ENCODE measurements at regions of chr11 and their contacts with region 1.

Region 1: GRCh38 chr11:70078095-70078795 is at the start of gene ANO1:
- DNase-seq: peak; percentile 33
- H3K4me3 ChIP-seq: peak within 1 kb of the TSS; percentile 31 to 48
- H3K27ac ChIP-seq: peak within 1 kb of the TSS; percentile 57
- H3K4me1 ChIP-seq: no peaks in the 10 kb centered on the region
- H3K27me3 ChIP-seq: no peaks in the 10 kb centered on the region
- CTCF ChIP-seq: peak in 1 of 4 experiments; percentile 29
- POLR2A ChIP-seq: no peak
- total RNA-seq, gene ANO1: 34.6 to 43.9 TPM

Region 2: DNA sequence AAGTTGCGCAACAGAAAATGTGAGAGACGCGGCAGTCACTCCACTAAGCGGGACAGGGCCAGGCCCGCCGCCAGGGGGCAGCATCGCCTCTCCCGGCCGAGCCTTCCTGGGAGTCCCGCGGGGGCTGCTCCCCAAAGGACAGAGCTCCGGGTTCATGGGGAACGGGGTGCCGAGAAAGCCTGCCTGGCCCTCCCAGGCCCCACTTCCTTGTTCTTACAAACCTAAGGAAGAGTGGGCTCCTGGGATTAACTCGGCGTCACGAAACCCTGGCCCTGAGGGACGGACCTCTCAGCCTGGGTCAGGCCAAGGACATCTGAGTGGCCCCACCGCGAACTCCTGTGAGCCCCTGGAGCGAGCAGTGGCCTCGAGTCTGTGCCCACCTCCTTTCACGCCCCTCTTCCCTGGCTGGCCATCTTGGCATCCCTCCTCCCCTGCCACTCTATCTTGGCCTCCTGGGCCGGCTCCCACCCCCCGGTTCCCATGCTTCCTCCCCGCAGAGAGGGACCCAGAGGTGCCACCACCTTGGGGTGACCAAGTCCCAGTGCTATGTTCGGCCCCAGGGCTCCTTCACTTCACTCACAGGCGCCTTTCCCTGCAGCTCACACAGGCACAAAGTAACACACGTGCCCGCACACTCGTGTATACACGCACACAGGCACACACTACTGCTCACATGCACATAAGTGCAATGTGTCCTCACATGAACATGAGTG is 159.2 kb before region 1 on chr11:
- intact Hi-C with region 1: loop called (anchors 5 kb)
- DNase-seq: peak; percentile 58
- H3K4me3 ChIP-seq: no peak overlapping the region
- H3K27ac ChIP-seq: no peak overlapping the region
- H3K4me1 ChIP-seq: no peaks in the 10 kb centered on the region
- H3K27me3 ChIP-seq: no peaks in the 10 kb centered on the region
- CTCF ChIP-seq: peak; percentile 90 to 95 (median 93)
- POLR2A ChIP-seq: no peak

Measured in prostate gland (tissue), 2 donors.